ENCODE measurements at regions of chr1 and their contacts with region 1.

Region 1: GRCh38 chr1:215526553-215527151 is 40.5 kb upstream of the KCTD3 start:
- DNase-seq: no peak
- H3K4me3 ChIP-seq: no peak overlapping the region
- H3K27ac ChIP-seq: no peak overlapping the region
- H3K4me1 ChIP-seq: no peaks in the 10 kb centered on the region
- H3K27me3 ChIP-seq: no peaks in the 10 kb centered on the region
- CTCF ChIP-seq: peak; percentile 64 to 77 (median 72)
- EP300 ChIP-seq: no peak
- POLR2A ChIP-seq: no peak

Region 2: GRCh38 chr1:214632091-214632490 is 894.6 kb before region 1 on chr1:
- in situ Hi-C with region 1: loop called in 2 of 4 experiments (anchors 10 to 25 kb)
- intact Hi-C with region 1: loop called (anchors 5 kb)
- DNase-seq: no peak
- H3K4me3 ChIP-seq: no peak overlapping the region
- H3K27ac ChIP-seq: no peak overlapping the region
- H3K4me1 ChIP-seq: no peaks in the 10 kb centered on the region
- H3K27me3 ChIP-seq: no peaks in the 10 kb centered on the region
- CTCF ChIP-seq: no peak
- EP300 ChIP-seq: no peak
- POLR2A ChIP-seq: no peak

Region 3: DNA sequence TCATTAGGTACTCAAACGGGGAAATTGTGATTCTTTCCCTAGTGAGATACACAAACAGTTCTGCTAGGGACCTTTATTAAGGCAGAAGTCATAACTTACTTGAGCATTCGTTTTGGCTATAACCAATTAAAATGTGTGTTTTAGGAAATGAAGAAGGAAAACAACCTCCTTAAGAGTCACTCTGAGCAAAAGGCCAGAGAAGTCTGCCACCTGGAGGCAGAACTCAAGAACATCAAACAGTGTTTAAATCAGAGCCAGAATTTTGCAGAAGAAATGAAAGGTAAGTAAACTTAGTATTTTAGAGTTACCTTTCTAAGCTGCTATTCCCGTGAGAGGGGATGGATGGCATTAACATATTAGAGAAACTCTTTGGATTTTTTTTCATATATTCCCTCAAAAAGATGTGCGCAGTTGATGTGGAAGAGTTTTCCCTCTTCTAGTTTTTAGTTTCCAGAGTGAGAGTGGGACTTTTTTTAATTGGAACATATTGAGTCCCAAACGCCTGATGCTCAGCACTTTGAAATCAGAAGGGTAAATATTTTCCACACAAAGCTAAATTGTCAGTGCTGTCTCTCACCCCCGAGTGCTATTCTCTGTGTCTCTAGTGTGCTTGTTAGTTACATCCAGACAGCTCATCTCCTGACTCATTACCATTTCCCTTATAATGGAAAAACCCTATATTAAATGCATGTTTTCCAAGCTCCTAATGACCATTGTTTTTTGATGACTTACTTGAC is 888.8 kb before region 1 on chr1:
- in situ Hi-C with region 1: loop called in 2 of 4 experiments (anchors 10 to 25 kb)
- intact Hi-C with region 1: no loop called
- DNase-seq: peak; percentile 9
- H3K4me3 ChIP-seq: no peak overlapping the region
- H3K27ac ChIP-seq: no peak overlapping the region
- H3K4me1 ChIP-seq: no peaks in the 10 kb centered on the region
- H3K27me3 ChIP-seq: no peaks in the 10 kb centered on the region
- CTCF ChIP-seq: peak; percentile 32 to 66 (median 57)
- EP300 ChIP-seq: no peak
- POLR2A ChIP-seq: no peak

Measured in transverse colon (tissue), 4 donors.